Ovary (tissue), 10 donors: ENCODE measurements at regions of chr3 and their contacts with region 1.

Region 1: DNA sequence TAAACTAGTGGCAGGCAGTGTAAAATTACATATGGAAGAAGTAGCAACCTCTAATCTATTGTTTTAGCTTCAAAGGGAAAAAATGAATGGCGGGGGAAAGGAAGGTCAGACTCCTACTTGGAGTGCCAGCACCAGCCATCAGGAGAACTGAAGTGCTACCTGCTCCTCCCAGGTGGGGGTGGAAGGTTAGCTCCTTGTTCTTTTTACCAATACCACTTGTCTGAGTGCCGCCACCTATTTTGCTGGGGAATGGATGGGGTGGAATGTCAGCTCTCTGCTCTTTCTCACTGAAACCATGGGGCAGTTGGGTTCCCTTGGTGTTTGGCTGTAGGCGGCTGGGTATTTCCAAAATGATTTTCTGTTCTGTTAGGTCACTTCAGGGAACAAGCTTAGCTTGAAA is 428.7 kb upstream of the EPHA3 start:
- DNase-seq: no peak
- H3K4me3 ChIP-seq: no peak overlapping the region
- H3K27ac ChIP-seq: no peak overlapping the region
- H3K4me1 ChIP-seq: no peaks in the 10 kb centered on the region
- H3K27me3 ChIP-seq: no peaks in the 10 kb centered on the region
- CTCF ChIP-seq: no peak
- EP300 ChIP-seq: no peak
- POLR2A ChIP-seq: no peak

Region 2: DNA sequence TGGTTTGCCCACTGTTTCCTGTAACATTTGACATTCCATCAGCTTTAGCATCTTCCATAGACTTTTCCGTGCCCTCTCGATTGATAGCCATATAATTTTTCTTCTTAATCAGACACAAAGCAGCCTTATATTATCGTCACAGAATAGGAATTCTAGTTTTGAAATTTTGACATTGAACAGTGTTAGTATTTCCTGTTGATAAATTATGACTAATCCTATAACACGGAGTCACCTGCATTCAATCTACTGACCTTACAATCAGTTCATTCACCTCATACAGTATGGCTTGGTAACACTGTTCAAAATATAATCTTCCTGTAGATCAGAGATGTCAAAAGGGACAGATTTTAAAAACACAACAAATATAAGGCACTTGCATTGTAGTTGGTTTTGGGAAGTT is 105.3 kb before region 1 on chr3:
- intact Hi-C with region 1: loop called in 1 of 4 experiments (anchors 5 kb)
- DNase-seq: no peak
- H3K4me3 ChIP-seq: no peak overlapping the region
- H3K27ac ChIP-seq: no peak overlapping the region
- H3K4me1 ChIP-seq: no peaks in the 10 kb centered on the region
- H3K27me3 ChIP-seq: no peaks in the 10 kb centered on the region
- CTCF ChIP-seq: no peak
- EP300 ChIP-seq: no peak
- POLR2A ChIP-seq: no peak

Region 3: GRCh38 chr3:88661433-88661824 is 17.3 kb before region 1 on chr3:
- intact Hi-C with region 1: loop called in 1 of 4 experiments (anchors 1 kb)
- DNase-seq: no peak
- H3K4me3 ChIP-seq: no peak overlapping the region
- H3K27ac ChIP-seq: no peak overlapping the region
- H3K4me1 ChIP-seq: no peaks in the 10 kb centered on the region
- H3K27me3 ChIP-seq: no peaks in the 10 kb centered on the region
- CTCF ChIP-seq: no peak
- EP300 ChIP-seq: no peak
- POLR2A ChIP-seq: no peak

Region 4: DNA sequence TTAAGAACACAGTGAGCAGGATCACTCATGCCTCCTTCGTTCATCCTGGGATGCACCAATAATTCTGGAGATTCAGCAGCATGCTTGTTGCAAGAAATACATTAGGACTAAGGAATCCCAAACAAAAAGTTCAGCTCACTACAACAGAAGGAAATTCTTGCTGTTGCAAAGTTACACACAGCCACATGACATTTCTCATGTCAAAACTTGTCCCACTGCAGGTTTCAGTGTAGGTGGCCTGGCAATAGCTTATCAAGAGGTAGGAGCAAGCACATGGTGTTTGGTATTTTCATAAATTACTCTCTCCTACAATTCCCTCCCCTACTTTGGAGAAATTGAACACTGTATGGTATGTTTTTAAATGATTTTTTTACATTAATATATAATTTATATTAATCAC is 29.1 kb after region 1 on chr3:
- intact Hi-C with region 1: no loop called
- DNase-seq: no peak
- H3K4me3 ChIP-seq: no peak overlapping the region
- H3K27ac ChIP-seq: no peak overlapping the region
- H3K4me1 ChIP-seq: no peaks in the 10 kb centered on the region
- H3K27me3 ChIP-seq: no peaks in the 10 kb centered on the region
- CTCF ChIP-seq: no peak
- EP300 ChIP-seq: no peak
- POLR2A ChIP-seq: no peak